ENCODE measurements at regions of chr3 and their contacts with region 1.

Region 1: DNA sequence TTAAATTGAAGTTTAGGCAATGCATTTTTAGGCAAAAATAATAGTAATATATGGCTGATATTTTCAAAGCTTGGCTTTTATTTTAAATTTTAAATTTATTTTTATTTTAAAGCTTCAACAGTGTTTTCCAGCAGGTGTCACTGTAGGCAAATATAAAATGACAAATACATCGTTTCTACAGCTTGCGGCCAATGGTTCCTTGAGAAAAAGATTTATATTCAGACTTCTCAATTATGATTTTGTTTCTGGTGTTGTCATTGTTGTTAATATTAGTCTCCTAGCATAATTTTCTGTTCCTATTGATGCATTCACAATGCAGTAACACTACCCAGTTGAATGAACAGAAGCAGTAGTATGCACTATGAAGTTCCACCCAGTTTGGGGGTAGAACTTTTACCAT is 220.7 kb upstream of the DNAJC19 start:
- DNase-seq: no peak
- ATAC-seq: no peak
- H3K4me3 ChIP-seq: no peak overlapping the region
- H3K27ac ChIP-seq: no peak overlapping the region
- H3K4me1 ChIP-seq: no peaks in the 10 kb centered on the region
- H3K27me3 ChIP-seq: no peaks in the 10 kb centered on the region

Region 2: GRCh38 chr3:181329024-181329423 is 118.7 kb after region 1 on chr3:
- intact Hi-C with region 1: no loop called
- DNase-seq: no peak
- ATAC-seq: no peak
- H3K4me3 ChIP-seq: no peak overlapping the region
- H3K27ac ChIP-seq: no peak overlapping the region
- H3K4me1 ChIP-seq: no peaks in the 10 kb centered on the region
- H3K27me3 ChIP-seq: no peaks in the 10 kb centered on the region

Region 3: DNA sequence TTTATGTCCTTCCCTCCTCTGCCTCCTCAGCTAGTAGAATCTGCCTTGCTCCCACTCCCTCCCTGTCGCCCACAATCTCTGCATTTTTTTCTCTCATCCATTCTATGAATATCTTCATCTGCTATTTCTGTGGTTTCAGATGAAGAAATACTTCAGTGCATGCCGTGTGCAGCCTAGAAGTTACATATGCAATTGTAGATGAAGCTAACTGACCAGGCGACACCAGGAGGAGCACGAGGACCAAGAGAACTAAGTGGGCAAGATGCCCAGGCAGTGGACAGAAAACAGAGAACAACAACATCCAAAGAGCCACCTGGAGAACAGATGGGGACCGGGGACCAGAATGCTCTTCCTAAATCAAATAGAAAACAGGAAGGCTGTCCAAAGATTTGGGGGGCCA is 1461.7 kb after region 1 on chr3:
- intact Hi-C with region 1: loop called in 1 of 2 experiments (anchors 10 kb)
- DNase-seq: no peak
- ATAC-seq: no peak
- H3K4me3 ChIP-seq: no peak overlapping the region
- H3K27ac ChIP-seq: no peak overlapping the region
- H3K4me1 ChIP-seq: no peaks in the 10 kb centered on the region
- H3K27me3 ChIP-seq: no peaks in the 10 kb centered on the region